AG04450 (cell line): ENCODE measurements at regions of chr11 and their contacts with region 1.

Region 1: GRCh38 chr11:67353317-67354074 is at the start of gene POLD4:
- DNase-seq: peak; percentile 86
- H3K4me3 ChIP-seq: peak within 1 kb of the TSS; percentile 83
- H3K27ac ChIP-seq: peak within 1 kb of the TSS; percentile 97
- H3K27me3 ChIP-seq: no peaks in the 10 kb centered on the region
- CTCF ChIP-seq: no peak
- polyA plus RNA-seq, gene POLD4: 45.9 and 70.6 TPM in 2 replicates

Region 2: DNA sequence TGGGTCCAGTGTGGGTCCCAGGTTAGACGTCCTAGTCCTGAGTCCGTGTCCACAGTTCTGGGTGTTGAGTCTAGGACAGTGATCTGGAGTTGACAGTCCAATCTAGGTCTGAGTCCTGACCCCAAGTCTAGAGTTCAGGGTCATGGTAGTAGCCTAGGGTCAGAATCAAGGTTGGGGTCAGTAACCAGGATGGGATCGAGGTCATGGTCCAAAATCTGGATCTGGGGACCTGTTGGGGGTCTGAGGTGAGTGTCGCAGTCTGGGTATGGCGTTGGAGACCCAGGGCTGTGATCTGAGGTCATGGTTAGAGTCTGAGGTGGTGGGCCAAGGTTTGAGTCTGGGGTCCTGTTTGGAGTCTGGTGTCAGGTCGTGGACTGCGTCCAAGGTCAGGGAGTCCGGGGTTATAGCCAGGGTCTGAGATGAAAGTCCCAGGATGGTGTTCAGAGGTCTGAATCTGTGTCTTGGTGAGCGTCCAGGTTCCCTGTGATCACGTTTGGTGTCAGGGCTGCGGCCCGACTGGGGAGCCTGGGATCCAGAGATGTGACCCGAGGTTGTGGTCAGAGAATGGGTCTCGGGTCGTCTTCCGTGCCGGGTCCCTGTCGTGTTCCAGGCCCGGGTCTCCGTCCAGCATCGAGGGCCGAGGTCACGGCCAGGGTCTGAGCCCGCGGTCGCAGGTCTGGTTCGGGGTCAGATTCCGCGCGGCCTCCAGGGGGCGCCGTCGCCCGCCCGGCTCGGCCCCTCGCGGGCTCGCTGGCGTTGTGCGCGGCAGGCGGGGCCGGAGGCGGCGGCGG is 87.7 kb before region 1 on chr11:
- CTCF ChIA-PET with region 1: interaction called, 23 read pairs
- POLR2A ChIA-PET with region 1: no interaction called
- DNase-seq: no peak
- H3K4me3 ChIP-seq: peak overlapping the region; percentile 54
- H3K27ac ChIP-seq: no peak overlapping the region
- H3K27me3 ChIP-seq: no peaks in the 10 kb centered on the region
- CTCF ChIP-seq: peak; percentile 62

Region 3: GRCh38 chr11:67332081-67332691 is 21.3 kb before region 1 on chr11:
- CTCF ChIA-PET with region 1: interaction called, 18 read pairs
- POLR2A ChIA-PET with region 1: interaction called, 7 read pairs
- DNase-seq: no peak
- H3K4me3 ChIP-seq: no peak overlapping the region
- H3K27ac ChIP-seq: no peak overlapping the region
- H3K27me3 ChIP-seq: no peaks in the 10 kb centered on the region
- CTCF ChIP-seq: no peak

Region 4: GRCh38 chr11:67366961-67367760 is 13.7 kb after region 1 on chr11:
- CTCF ChIA-PET with region 1: interaction called, 716 read pairs
- POLR2A ChIA-PET with region 1: interaction called, 106 read pairs
- DNase-seq: no peak
- H3K4me3 ChIP-seq: no peak overlapping the region
- H3K27ac ChIP-seq: no peak overlapping the region
- H3K27me3 ChIP-seq: no peaks in the 10 kb centered on the region
- CTCF ChIP-seq: no peak

Region 5: GRCh38 chr11:67382276-67383136 is 29.0 kb after region 1 on chr11:
- CTCF ChIA-PET with region 1: interaction called, 716 read pairs
- POLR2A ChIA-PET with region 1: interaction called, 24 read pairs
- DNase-seq: no peak
- H3K4me3 ChIP-seq: no peak overlapping the region
- H3K27ac ChIP-seq: no peak overlapping the region
- H3K27me3 ChIP-seq: no peaks in the 10 kb centered on the region
- CTCF ChIP-seq: peak; percentile 99

Region 6: DNA sequence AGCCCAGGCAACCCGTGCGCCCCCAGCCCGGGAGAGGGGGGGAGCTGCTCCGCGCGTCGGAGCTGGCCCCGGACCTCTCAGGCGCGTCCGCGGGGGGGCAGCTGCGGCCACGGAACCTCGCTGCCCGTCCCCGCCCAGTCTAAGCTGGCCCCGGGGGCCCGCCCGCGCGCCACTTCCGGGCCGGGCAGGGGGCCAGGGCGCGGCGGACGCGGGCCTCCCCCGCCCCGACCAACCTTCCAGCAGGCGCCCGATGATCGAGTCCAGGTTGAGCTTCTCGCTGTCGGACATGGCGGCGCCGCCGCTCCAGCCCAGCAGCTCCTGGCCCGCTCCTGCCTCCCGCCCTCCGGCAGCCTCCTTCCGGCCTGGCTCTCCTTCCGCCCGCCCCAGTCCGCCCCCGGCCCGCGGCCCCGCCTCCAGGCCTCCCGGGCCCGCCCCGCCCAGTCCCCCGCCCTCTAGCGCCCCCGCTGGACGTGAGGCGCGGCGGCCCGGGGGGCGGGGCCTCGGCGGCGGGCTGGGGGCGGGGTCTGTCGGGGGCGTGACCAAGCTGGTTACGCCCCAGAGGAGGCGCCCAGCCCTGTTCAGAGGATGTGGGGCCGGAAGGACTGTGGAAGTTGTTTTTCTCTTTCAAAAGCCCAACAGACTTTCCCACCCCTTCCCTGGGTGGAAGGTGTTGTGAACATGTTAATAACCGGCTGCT is 48.1 kb after region 1 on chr11 and contains the start of gene PPP1CA:
- CTCF ChIA-PET with region 1: interaction called, 23 read pairs
- POLR2A ChIA-PET with region 1: interaction called, 7 read pairs
- DNase-seq: peak; percentile 65
- H3K4me3 ChIP-seq: peak within 1 kb of the TSS; percentile 91
- H3K27ac ChIP-seq: peak within 1 kb of the TSS; percentile 82
- H3K27me3 ChIP-seq: no peaks in the 10 kb centered on the region
- CTCF ChIP-seq: 0 out of 2 replicates have a peak, but pooled peaks have one; percentile 7
- polyA plus RNA-seq, gene PPP1CA: 116 and 140 TPM in 2 replicates

Region 7: GRCh38 chr11:67523556-67524479 is 170.3 kb after region 1 on chr11:
- CTCF ChIA-PET with region 1: no interaction called
- POLR2A ChIA-PET with region 1: no interaction called
- DNase-seq: no peak
- H3K4me3 ChIP-seq: no peak overlapping the region
- H3K27ac ChIP-seq: no peak overlapping the region
- H3K27me3 ChIP-seq: peaks cover 18% of the 10 kb centered on the region
- CTCF ChIP-seq: no peak

Region 8: GRCh38 chr11:67583247-67584204 is 230.0 kb after region 1 on chr11 and contains the start of gene GSTP1:
- CTCF ChIA-PET with region 1: no interaction called
- POLR2A ChIA-PET with region 1: no interaction called
- DNase-seq: peak; percentile 78
- H3K4me3 ChIP-seq: peak within 1 kb of the TSS; percentile 80
- H3K27ac ChIP-seq: peak within 1 kb of the TSS; percentile 81
- H3K27me3 ChIP-seq: peaks cover 16% of the 10 kb centered on the region
- CTCF ChIP-seq: peak; percentile 51
- polyA plus RNA-seq, gene GSTP1: 716 and 965 TPM in 2 replicates